ENCODE measurements at regions of chr2 and their contacts with region 1.

Region 1: DNA sequence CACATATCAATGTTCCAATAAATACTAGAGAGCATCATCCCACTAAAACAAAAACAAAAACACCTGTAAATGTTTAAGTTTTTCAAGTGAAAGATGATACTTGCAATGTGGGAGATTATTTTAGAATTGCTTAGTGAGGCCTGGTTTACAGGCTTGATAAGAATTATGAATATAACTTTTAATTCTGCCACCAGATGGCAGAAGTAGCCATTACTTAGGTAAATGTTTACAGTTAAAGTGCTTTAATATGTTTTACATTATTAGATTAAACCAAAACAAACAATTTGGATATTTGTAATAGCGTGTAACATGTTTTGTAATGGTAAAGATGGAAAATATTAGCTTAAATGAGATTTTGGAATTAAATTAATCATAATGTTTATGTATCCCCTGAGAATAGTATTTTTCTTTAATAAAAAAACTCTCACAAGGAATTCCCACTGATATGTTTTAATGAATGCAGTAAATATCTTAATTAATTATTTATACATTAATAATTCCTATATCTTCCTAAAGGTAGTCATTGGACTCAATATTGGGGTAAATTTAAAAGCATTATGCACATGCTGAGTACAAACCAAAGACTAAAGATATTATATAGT is 522.0 kb downstream of the SPAG16 start:
- DNase-seq: peak; percentile 71
- ATAC-seq: no peak; the same call in 1 of the 2 replicates
- H3K4me3 ChIP-seq: no peak overlapping the region
- H3K27ac ChIP-seq: no peak overlapping the region
- H3K4me1 ChIP-seq: no peaks in the 10 kb centered on the region
- H3K27me3 ChIP-seq: no peaks in the 10 kb centered on the region
- CTCF ChIP-seq: peak; percentile 73

Region 2: DNA sequence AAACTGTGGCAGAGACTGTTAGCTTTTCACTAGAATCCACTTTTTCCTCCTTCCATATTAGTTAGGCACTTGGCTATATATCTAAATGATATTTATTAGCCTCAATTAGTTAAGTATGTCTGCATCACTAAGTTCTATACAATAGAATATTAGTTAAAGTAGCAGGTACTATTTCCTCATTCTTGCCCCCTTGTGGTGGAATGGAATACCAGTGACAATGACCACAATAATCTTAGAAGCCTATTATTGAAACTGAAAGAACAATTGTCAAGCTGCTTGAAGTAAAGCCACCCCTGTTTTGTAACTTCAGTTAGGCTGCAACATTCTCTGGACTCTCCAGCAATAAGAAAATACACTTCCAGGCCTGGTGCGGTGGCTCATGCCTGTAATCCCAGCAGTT is 128.3 kb after region 1 on chr2:
- CTCF ChIA-PET with region 1: no interaction called
- POLR2A ChIA-PET with region 1: no interaction called
- intact Hi-C with region 1: loop called (anchors 10 kb)
- DNase-seq: peak; percentile 62
- ATAC-seq: peak; percentile 31; the same call in 1 of the 2 replicates
- H3K4me3 ChIP-seq: no peak overlapping the region
- H3K27ac ChIP-seq: no peak overlapping the region
- H3K4me1 ChIP-seq: peaks cover 12% of the 10 kb centered on the region
- H3K27me3 ChIP-seq: no peaks in the 10 kb centered on the region
- CTCF ChIP-seq: peak; percentile 68

Region 3: DNA sequence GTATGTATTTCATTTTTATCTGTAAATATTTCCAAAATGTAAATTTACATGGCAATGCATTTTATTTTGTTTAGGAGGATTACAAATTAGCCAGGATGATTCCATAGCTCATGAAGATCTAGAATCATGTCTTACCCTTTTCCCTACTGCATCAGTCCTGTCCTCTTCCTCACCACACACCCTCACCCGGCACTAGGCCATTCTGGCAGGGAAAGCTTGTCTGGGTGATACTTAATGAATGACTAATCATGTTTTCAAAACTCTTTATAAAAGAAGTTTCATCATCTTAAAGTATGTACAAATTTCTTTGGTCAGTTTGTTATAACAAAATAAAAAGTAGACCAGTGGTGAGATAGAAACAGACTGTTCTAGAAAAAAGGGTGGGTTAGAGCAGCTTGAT is 321.3 kb after region 1 on chr2:
- CTCF ChIA-PET with region 1: no interaction called
- POLR2A ChIA-PET with region 1: no interaction called
- intact Hi-C with region 1: no loop called
- DNase-seq: peak; percentile 55
- ATAC-seq: peak; percentile 41
- H3K4me3 ChIP-seq: no peak overlapping the region
- H3K27ac ChIP-seq: no peak overlapping the region
- H3K4me1 ChIP-seq: peaks cover 36% of the 10 kb centered on the region
- H3K27me3 ChIP-seq: no peaks in the 10 kb centered on the region
- CTCF ChIP-seq: no peak

Region 4: GRCh38 chr2:214169736-214170135 is 363.5 kb after region 1 on chr2:
- CTCF ChIA-PET with region 1: no interaction called
- POLR2A ChIA-PET with region 1: no interaction called
- intact Hi-C with region 1: no loop called
- DNase-seq: no peak
- ATAC-seq: peak; percentile 60
- H3K4me3 ChIP-seq: no peak overlapping the region
- H3K27ac ChIP-seq: no peak overlapping the region
- H3K4me1 ChIP-seq: no peaks in the 10 kb centered on the region
- H3K27me3 ChIP-seq: no peaks in the 10 kb centered on the region
- CTCF ChIP-seq: no peak

Region 5: DNA sequence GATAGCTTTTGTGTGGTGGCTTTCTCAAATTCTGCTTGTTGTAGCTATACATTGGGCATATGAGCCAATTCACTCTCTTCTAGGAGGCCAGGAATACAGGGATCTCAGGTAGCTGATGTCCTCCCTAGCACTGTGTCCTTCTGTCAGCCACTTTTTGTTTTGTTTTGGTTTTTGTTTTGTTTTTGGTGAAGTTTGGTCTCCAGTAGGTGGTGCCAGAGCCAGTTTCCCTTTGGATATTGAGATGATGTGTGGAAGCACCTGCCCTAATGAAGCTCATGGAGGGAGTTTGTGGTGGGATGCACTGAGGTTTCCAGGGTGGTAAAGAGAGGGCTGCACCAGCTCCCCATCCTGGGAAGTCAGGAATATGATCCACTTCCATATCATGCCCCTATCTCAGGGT is 504.1 kb after region 1 on chr2:
- CTCF ChIA-PET with region 1: no interaction called
- POLR2A ChIA-PET with region 1: no interaction called
- intact Hi-C with region 1: loop called (anchors 5 kb)
- DNase-seq: peak; percentile 33
- ATAC-seq: peak; percentile 10; the same call in 1 of the 2 replicates
- H3K4me3 ChIP-seq: no peak overlapping the region
- H3K27ac ChIP-seq: no peak overlapping the region
- H3K4me1 ChIP-seq: peaks cover 24% of the 10 kb centered on the region
- H3K27me3 ChIP-seq: no peaks in the 10 kb centered on the region
- CTCF ChIP-seq: peak; percentile 54

Region 6: DNA sequence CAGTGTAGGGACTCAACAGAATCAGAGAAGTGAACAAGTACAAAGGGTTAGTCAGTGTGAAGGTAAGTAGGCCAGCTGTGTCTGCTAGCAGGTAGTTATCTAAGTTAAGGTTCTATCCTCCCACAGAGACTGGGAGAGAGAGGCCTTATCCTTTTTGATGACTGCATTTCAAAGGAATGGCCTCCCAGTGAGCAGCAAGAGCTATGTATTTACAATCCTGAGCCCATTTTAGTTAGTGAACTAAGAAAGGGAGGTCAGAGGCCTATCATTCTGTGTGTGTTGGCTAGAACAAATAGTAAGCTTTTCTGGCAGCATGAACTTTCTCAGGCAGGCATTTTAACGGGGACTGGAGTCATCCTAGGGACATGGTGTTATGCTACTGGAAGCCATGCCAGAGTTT is 787.5 kb after region 1 on chr2:
- CTCF ChIA-PET with region 1: no interaction called
- POLR2A ChIA-PET with region 1: no interaction called
- intact Hi-C with region 1: loop called (anchors 10 kb)
- DNase-seq: peak; percentile 41
- ATAC-seq: peak; percentile 64
- H3K4me3 ChIP-seq: no peak overlapping the region
- H3K27ac ChIP-seq: no peak overlapping the region
- H3K4me1 ChIP-seq: no peaks in the 10 kb centered on the region
- H3K27me3 ChIP-seq: no peaks in the 10 kb centered on the region
- CTCF ChIP-seq: no peak

Region 7: DNA sequence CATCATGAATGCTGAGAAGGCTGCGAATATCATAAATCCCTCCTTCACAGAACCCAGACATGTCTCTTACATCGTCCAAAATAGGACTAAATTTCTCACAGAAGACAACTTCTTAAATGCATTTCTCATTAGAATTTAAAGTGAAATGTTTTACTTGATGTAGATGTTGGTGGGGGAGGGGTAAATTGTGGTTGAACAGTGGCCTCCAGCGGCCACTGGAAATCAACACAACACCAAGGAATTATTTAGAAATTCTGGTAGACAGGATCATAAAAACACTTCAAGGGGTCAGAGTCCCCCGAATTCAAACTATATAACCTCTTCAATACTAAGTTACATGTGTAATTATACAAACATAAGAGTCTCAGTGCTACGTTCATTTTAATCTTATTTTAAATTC is 1196.3 kb after region 1 on chr2:
- CTCF ChIA-PET with region 1: no interaction called
- POLR2A ChIA-PET with region 1: no interaction called
- intact Hi-C with region 1: loop called (anchors 5 kb)
- DNase-seq: peak; percentile 59
- ATAC-seq: peak; percentile 76
- H3K4me3 ChIP-seq: no peak overlapping the region
- H3K27ac ChIP-seq: no peak overlapping the region
- H3K4me1 ChIP-seq: peaks cover 5% of the 10 kb centered on the region; the same call in 1 of the 2 replicates
- H3K27me3 ChIP-seq: no peaks in the 10 kb centered on the region
- CTCF ChIP-seq: peak; percentile 85

Measured in PC-3 (cell line).